ENCODE measurements at regions of chr2 and their contacts with region 1.

Region 1: DNA sequence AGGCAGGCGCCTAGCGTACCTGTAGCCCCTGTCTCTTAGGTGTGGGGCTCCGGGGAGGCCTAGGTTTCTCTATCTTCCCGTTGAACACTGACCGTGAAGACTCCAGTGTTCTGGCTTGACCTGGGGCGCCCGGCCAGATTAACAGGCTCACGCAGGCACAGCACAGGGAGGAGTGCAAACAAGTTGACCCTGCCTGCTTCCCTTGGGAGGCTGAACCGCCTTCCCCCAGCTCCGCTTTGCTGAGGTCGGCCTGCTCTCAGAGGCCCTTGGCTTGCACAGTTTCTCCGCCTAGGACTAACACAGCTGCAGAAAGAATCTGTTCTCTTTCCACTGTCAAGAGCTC is 566 bp downstream of the PCYOX1 start:
- DNase-seq: peak in 1 of 2 experiments; percentile 63
- H3K4me3 ChIP-seq: peak overlapping the region; percentile 76 to 87 (median 78)
- H3K27ac ChIP-seq: no peak overlapping the region
- H3K4me1 ChIP-seq: peaks cover 0 to 8% (median 3%) of the 10 kb centered on the region in 4 experiments; a peak in 5 of 7 replicates
- H3K27me3 ChIP-seq: no peaks in the 10 kb centered on the region
- CTCF ChIP-seq: no peak
- EP300 ChIP-seq: no peak
- POLR2A ChIP-seq: no peak
- RAD21 ChIP-seq: no peak

Region 2: GRCh38 chr2:70009762-70010575 is 248.5 kb before region 1 on chr2:
- CTCF ChIA-PET with region 1: no interaction called
- POLR2A ChIA-PET with region 1: no interaction called
- DNase-seq: no peak
- H3K4me3 ChIP-seq: no peak overlapping the region
- H3K27ac ChIP-seq: no peak overlapping the region
- H3K4me1 ChIP-seq: peaks cover 4 to 8% (median 8%) of the 10 kb centered on the region in 4 experiments
- H3K27me3 ChIP-seq: no peaks in the 10 kb centered on the region
- CTCF ChIP-seq: no peak
- EP300 ChIP-seq: no peak
- POLR2A ChIP-seq: no peak
- RAD21 ChIP-seq: no peak

Region 3: GRCh38 chr2:70043252-70043875 is 215.1 kb before region 1 on chr2:
- CTCF ChIA-PET with region 1: no interaction called
- POLR2A ChIA-PET with region 1: no interaction called
- DNase-seq: no peak
- H3K4me3 ChIP-seq: no peak overlapping the region
- H3K27ac ChIP-seq: no peak overlapping the region
- H3K4me1 ChIP-seq: no peaks in the 10 kb centered on the region
- H3K27me3 ChIP-seq: no peaks in the 10 kb centered on the region
- CTCF ChIP-seq: no peak
- EP300 ChIP-seq: no peak
- POLR2A ChIP-seq: no peak
- RAD21 ChIP-seq: no peak

Region 4: DNA sequence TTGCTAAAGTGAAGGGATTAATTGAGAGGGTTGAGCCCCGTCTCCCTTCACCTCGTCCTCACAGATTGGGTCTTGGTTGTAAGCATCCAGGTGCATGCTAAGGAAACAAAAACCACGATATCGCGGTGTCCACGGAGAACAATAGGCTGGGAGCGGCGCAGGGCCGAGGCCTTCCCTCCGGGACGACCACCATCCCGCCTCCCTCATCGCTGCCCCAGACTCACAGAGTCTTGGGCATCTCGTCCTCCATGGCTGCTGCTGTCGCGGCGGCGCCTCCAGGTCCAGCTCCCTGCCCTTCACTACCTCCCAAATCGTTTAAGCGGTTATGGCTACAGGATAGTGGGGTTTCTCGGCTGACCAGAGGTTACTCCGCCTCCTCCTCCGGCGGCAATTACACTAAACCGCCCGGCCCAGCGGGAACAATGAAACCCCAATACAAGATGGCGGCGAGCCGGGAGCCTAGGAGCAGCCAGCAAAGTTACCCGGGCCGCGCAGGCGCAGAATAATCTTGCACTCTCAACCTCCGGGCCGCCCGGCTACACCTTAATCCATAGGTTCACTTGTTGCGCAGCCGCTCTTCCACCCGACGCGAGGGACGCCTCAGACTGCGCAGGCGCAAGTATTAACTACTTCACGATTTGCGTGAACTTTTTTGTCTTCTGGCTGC is 10.2 kb before region 1 on chr2 and contains the start of gene TIA1:
- CTCF ChIA-PET with region 1: interaction called, 3 read pairs
- POLR2A ChIA-PET with region 1: interaction called, 31 read pairs
- DNase-seq: peak; percentile 97 to 98
- H3K4me3 ChIP-seq: peak within 1 kb of the TSS; percentile 82 to 100 (median 98)
- H3K27ac ChIP-seq: peak within 1 kb of the TSS; percentile 99
- H3K4me1 ChIP-seq: peaks cover 0 to 5% (median 3%) of the 10 kb centered on the region in 4 experiments; a peak in 6 of 7 replicates
- H3K27me3 ChIP-seq: no peaks in the 10 kb centered on the region
- CTCF ChIP-seq: no peak
- EP300 ChIP-seq: no peak
- POLR2A ChIP-seq: peak; percentile 87 to 97
- RAD21 ChIP-seq: no peak
- total RNA-seq, gene TIA1: 152 and 181 TPM in 2 replicates

Region 5: DNA sequence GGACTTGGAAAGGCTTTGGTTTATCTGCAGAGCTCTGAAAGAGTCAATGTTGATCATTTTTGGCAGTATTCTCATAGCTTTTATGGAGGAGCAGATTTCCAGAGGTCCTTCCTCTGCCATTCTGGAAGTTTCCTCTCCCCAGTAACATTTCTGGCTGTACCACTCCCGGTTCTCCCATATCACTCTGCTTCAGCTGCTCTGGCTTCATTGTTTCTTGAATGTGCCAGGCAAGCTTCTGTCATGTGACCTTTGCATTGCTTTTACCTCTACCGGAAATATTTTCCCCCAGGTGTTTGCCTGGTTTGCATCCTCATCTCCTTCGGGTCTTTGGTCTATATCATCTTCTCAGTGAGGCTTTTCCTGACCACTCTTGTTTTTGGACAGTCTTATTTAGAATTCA is 11.8 kb after region 1 on chr2:
- CTCF ChIA-PET with region 1: interaction called, 3 read pairs
- POLR2A ChIA-PET with region 1: interaction called, 11 read pairs
- DNase-seq: no peak
- H3K4me3 ChIP-seq: no peak overlapping the region
- H3K27ac ChIP-seq: no peak overlapping the region
- H3K4me1 ChIP-seq: no peaks in the 10 kb centered on the region
- H3K27me3 ChIP-seq: no peaks in the 10 kb centered on the region
- CTCF ChIP-seq: no peak
- EP300 ChIP-seq: no peak
- POLR2A ChIP-seq: no peak
- RAD21 ChIP-seq: no peak

Region 6: GRCh38 chr2:70283500-70284191 is 25.1 kb after region 1 on chr2:
- CTCF ChIA-PET with region 1: no interaction called
- POLR2A ChIA-PET with region 1: interaction called, 10 read pairs
- DNase-seq: no peak
- H3K4me3 ChIP-seq: no peak overlapping the region
- H3K27ac ChIP-seq: no peak overlapping the region
- H3K4me1 ChIP-seq: no peaks in the 10 kb centered on the region
- H3K27me3 ChIP-seq: no peaks in the 10 kb centered on the region
- CTCF ChIP-seq: no peak
- EP300 ChIP-seq: no peak
- POLR2A ChIP-seq: no peak
- RAD21 ChIP-seq: no peak

Region 7: GRCh38 chr2:70508711-70509462 is 250.4 kb after region 1 on chr2:
- CTCF ChIA-PET with region 1: no interaction called
- POLR2A ChIA-PET with region 1: no interaction called
- DNase-seq: no peak
- H3K4me3 ChIP-seq: no peak overlapping the region
- H3K27ac ChIP-seq: no peak overlapping the region
- H3K4me1 ChIP-seq: peaks cover 0 to 13% (median 7%) of the 10 kb centered on the region in 4 experiments; a peak in 5 of 7 replicates
- H3K27me3 ChIP-seq: no peaks in the 10 kb centered on the region
- CTCF ChIP-seq: no peak
- EP300 ChIP-seq: no peak
- POLR2A ChIP-seq: no peak
- RAD21 ChIP-seq: no peak

Measured in H1 (cell line).